ENCODE measurements at regions of chr12 and their contacts with region 1.

Region 1: GRCh38 chr12:109462710-109463692 is 14.1 kb downstream of the KCTD10 start:
- H3K4me3 Mint-ChIP-seq: peak overlapping the region; percentile 49
- H3K27ac Mint-ChIP-seq: peak overlapping the region; percentile 90
- H3K4me1 Mint-ChIP-seq: peaks cover 100% of the 10 kb centered on the region
- H3K27me3 Mint-ChIP-seq: no peaks in the 10 kb centered on the region

Region 2: GRCh38 chr12:109020796-109021380 is 442.1 kb before region 1 on chr12 and contains the start of gene SVOP:
- intact Hi-C with region 1: no loop called
- H3K4me3 Mint-ChIP-seq: no peak within 1 kb of the TSS
- H3K27ac Mint-ChIP-seq: no peak within 1 kb of the TSS
- H3K4me1 Mint-ChIP-seq: peaks cover 6% of the 10 kb centered on the region
- H3K27me3 Mint-ChIP-seq: peaks cover 15% of the 10 kb centered on the region

Region 3: GRCh38 chr12:109477185-109477962 is 14.4 kb after region 1 on chr12 and contains the starts of genes KCTD10 and UBE3B:
- intact Hi-C with region 1: loop called (anchors 2 kb)
- H3K4me3 Mint-ChIP-seq: peak within 1 kb of the TSS; percentile 96
- H3K27ac Mint-ChIP-seq: peak within 1 kb of the TSS; percentile 99
- H3K4me1 Mint-ChIP-seq: peaks cover 44% of the 10 kb centered on the region
- H3K27me3 Mint-ChIP-seq: no peaks in the 10 kb centered on the region

Measured in dendritic cell treated with granulocyte-macrophage colony-stimulating factor and Interleukin-4, amounts not matched to agents 40 ng/mL and 50 ng/mL, for 4 days (primary cell).